Transverse colon (tissue), 4 donors: ENCODE measurements at regions of chr6 and their contacts with region 1.

Region 1: GRCh38 chr6:68040312-68040778 is 594.7 kb upstream of the ADGRB3 start:
- DNase-seq: no peak
- H3K4me3 ChIP-seq: no peak overlapping the region
- H3K27ac ChIP-seq: no peak overlapping the region
- H3K4me1 ChIP-seq: no peaks in the 10 kb centered on the region
- H3K27me3 ChIP-seq: no peaks in the 10 kb centered on the region
- CTCF ChIP-seq: no peak
- EP300 ChIP-seq: no peak
- POLR2A ChIP-seq: no peak

Region 2: DNA sequence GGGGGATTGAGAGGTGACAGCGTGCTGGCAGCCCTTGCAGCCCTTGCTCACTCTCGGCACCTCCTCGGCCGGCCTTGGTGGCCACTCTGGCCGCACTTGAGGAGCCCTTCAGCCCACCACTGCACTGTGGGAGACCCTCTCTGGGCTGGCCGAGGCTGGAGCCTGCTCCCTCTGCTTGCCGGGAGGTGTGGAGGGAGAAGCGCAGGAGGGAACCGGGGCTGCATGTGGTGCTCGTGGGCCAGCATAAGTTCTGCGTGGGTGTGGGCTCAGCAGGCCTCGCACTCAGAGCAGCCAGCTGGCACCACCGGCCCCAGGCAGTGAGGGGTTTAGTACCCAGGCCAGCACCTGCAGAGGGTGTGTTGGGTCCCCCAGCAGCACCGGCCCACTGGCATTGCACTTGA is 317.5 kb before region 1 on chr6:
- in situ Hi-C with region 1: no loop called
- intact Hi-C with region 1: no loop called
- DNase-seq: no peak
- H3K4me3 ChIP-seq: no peak overlapping the region
- H3K27ac ChIP-seq: no peak overlapping the region
- H3K4me1 ChIP-seq: no peaks in the 10 kb centered on the region
- H3K27me3 ChIP-seq: no peaks in the 10 kb centered on the region
- CTCF ChIP-seq: no peak
- EP300 ChIP-seq: no peak
- POLR2A ChIP-seq: no peak

Region 3: DNA sequence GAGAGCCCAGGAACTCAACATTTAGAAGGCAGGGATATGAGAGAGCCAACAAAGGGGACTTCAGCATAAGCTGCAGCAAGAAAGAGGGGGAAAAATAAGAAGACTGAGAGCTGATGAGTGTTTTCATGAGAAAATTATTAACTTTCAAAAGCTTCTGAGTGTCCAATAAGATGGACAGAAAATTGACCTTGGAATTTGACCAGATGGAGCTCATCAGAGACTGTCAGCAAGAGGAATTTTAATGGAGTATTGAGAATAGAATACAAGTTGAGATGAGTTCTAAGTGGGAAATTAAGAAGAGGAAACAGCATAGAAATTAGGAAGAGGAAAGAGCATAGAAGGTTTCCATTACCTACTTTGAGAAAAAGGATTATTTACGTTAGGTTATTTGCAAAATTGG is 1328.3 kb after region 1 on chr6:
- in situ Hi-C with region 1: no loop called
- intact Hi-C with region 1: loop called (anchors 10 kb)
- DNase-seq: no peak
- H3K4me3 ChIP-seq: no peak overlapping the region
- H3K27ac ChIP-seq: no peak overlapping the region
- H3K4me1 ChIP-seq: no peaks in the 10 kb centered on the region
- H3K27me3 ChIP-seq: no peaks in the 10 kb centered on the region
- CTCF ChIP-seq: no peak
- EP300 ChIP-seq: no peak
- POLR2A ChIP-seq: no peak